HEK293 (cell line): ENCODE measurements at regions of chr6 and their contacts with region 1.

Region 1: DNA sequence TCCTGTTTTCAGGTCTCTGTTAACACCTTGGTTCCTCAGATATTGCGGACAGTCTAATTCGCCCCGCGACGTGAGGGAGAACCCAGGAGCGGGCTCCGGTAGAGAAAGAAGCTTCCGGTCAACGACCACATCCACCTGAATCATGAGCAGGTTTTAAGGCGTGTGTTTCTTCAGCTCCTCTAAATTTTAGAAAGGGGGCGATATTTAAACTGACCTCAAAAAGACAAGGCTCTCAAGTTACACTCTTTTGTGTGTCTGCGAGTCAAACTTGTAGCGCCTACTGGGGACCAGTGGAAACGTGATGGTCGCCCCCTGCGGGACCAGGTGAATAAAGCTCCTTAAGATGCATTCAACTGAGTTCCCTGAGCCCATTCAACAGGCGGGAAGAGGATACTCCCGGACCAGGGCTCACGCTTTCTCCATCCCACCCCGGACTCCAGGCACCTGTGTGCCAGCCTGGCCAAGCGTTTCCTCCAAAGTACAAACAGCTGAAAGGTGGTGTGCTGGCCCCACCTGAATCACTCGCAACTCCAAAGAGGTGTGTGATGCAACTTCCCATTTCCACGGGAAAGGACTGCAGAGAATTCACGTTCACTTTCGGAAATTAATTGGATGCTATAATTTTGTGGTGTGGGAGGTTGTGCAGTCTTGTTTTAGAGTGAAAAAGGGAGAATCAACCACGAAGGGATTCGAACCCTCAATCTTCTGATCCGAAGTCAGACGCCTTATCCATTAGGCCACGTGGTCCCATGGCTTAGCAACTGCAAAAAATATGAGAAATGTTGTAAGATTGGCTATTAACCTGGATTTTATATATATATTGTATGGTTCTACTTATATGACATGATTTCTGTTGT is 17.0 kb downstream of the GPX5 start:
- H3K4me3 ChIP-seq: peak overlapping the region; percentile 54
- H3K27ac ChIP-seq: peak overlapping the region; percentile 53
- H3K4me1 ChIP-seq: no peaks in the 10 kb centered on the region
- CTCF ChIP-seq: peak; percentile 96

Region 2: DNA sequence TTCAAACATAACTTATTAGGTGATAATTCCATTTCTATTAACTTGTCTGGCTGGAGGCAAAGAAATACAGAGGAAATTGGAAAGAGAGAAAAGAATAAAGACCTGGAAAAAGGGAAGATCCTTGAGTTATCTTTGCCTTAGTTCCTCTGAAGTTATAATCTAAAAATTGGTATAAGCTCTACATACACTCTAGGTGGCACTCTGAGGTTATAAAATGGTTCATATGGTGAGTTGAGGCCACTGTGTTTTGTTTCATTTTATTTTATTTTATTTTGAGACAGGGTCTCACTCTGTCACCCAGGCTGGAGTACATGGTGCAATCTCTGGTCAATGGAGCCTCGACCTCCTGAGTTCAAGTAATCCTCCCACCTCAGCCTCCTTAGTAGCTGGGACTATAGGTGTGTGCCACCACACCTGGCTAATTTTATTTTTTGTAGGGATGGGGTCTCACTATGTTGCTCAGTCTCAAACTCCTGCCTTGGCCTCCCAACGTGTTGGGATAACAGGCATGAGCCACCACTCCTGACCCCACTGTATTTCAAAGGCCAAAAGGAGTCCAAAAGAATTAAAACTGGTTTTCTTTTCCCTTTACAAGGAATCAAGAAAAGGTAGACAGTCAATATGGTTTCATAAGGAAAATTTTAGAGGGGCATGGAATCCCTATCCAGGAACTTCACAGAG is 46.4 kb before region 1 on chr6:
- CTCF ChIA-PET with region 1: interaction called, 13 read pairs
- POLR2A ChIA-PET with region 1: no interaction called
- H3K4me3 ChIP-seq: no peak overlapping the region
- H3K27ac ChIP-seq: no peak overlapping the region
- H3K4me1 ChIP-seq: no peaks in the 10 kb centered on the region
- CTCF ChIP-seq: no peak

Region 3: DNA sequence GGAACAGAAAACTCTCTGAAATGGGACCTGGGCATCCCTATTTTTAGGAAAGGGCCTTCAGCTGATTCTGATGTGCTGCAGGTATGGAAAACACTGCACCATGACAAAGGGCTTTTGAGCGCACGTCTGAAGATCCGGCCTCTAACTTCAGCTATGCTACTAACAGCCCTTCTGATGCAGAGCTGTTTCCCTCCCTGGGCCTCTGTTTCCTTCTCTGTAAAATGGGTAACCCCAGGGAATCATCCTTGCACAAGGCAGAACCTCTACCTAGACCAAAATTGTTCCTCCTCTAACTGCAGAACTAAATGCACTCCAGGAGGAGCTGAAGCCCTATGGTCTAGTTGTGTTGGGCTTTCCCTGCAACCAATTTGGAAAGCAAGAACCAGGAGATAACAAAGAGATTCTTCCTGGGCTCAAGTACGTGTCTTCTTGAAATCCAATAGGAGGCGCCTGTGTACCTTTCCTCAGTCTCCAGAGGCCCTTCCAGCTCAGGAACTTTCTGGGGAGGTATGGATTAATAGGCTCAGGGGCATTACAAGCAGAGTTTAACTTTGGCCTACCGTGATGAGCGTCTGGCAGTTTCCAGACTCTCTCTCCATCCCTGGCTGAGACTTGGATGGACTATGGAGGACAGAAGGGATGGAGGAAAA is 11.1 kb before region 1 on chr6:
- CTCF ChIA-PET with region 1: interaction called, 24 read pairs
- POLR2A ChIA-PET with region 1: no interaction called
- H3K4me3 ChIP-seq: no peak overlapping the region
- H3K27ac ChIP-seq: no peak overlapping the region
- H3K4me1 ChIP-seq: no peaks in the 10 kb centered on the region
- CTCF ChIP-seq: no peak

Region 4: GRCh38 chr6:28565823-28566526 is 23.3 kb after region 1 on chr6:
- CTCF ChIA-PET with region 1: interaction called, 10 read pairs
- POLR2A ChIA-PET with region 1: no interaction called
- H3K4me3 ChIP-seq: no peak overlapping the region
- H3K27ac ChIP-seq: no peak overlapping the region
- H3K4me1 ChIP-seq: no peaks in the 10 kb centered on the region
- CTCF ChIP-seq: no peak

Region 5: GRCh38 chr6:28586962-28587745 is 44.5 kb after region 1 on chr6:
- CTCF ChIA-PET with region 1: interaction called, 25 read pairs
- POLR2A ChIA-PET with region 1: interaction called, 16 read pairs
- H3K4me3 ChIP-seq: peak overlapping the region; percentile 73
- H3K27ac ChIP-seq: peak overlapping the region; percentile 84
- H3K4me1 ChIP-seq: peaks cover 9% of the 10 kb centered on the region
- CTCF ChIP-seq: no peak